Calu3 (cell line): ENCODE measurements at regions of chr22 and their contacts with region 1.

Region 1: GRCh38 chr22:35313311-35314121 is 13.8 kb downstream of the TOM1 start:
- DNase-seq: peak; percentile 58
- H3K4me3 Mint-ChIP-seq: peak overlapping the region; percentile 59
- H3K27ac Mint-ChIP-seq: peak overlapping the region; percentile 99
- H3K4me1 Mint-ChIP-seq: peaks cover 57% of the 10 kb centered on the region
- H3K27me3 Mint-ChIP-seq: no peaks in the 10 kb centered on the region
- CTCF ChIP-seq: no peak

Region 2: DNA sequence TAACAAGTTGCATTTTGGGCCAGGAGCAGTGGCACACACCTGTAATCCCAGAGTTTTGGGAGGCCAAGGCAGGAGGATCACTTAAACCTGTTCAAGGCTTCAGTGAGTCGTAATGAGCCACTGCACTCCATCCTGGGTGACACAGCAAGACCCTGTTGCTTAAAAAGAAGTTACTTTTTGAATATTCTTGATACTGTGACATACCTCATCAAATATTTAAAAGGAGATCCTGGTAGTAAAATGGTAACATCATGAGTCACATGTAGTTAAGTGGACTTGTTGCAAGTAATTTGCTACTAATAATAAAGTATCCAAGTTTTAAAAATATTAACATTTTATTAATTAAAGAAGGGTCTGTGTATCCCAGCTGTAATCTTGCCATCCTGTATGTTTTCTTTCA is 37.9 kb before region 1 on chr22:
- CTCF ChIA-PET with region 1: interaction called, 15 read pairs
- intact Hi-C with region 1: no loop called
- DNase-seq: no peak
- H3K4me3 Mint-ChIP-seq: no peak overlapping the region
- H3K27ac Mint-ChIP-seq: no peak overlapping the region
- H3K4me1 Mint-ChIP-seq: no peaks in the 10 kb centered on the region
- H3K27me3 Mint-ChIP-seq: no peaks in the 10 kb centered on the region
- CTCF ChIP-seq: no peak

Region 3: GRCh38 chr22:35299673-35300497 is 13.6 kb before region 1 on chr22 and contains the start of gene TOM1:
- CTCF ChIA-PET with region 1: interaction called, 34 read pairs
- intact Hi-C with region 1: no loop called
- DNase-seq: peak; percentile 97
- H3K4me3 Mint-ChIP-seq: peak within 1 kb of the TSS; percentile 92
- H3K27ac Mint-ChIP-seq: peak within 1 kb of the TSS; percentile 99
- H3K4me1 Mint-ChIP-seq: peaks cover 18% of the 10 kb centered on the region
- H3K27me3 Mint-ChIP-seq: peaks cover 11% of the 10 kb centered on the region
- CTCF ChIP-seq: no peak
- total RNA-seq, gene TOM1: 49.1 and 50.0 TPM in 2 replicates